ENCODE measurements at regions of chr1 and their contacts with region 1.

Region 1: DNA sequence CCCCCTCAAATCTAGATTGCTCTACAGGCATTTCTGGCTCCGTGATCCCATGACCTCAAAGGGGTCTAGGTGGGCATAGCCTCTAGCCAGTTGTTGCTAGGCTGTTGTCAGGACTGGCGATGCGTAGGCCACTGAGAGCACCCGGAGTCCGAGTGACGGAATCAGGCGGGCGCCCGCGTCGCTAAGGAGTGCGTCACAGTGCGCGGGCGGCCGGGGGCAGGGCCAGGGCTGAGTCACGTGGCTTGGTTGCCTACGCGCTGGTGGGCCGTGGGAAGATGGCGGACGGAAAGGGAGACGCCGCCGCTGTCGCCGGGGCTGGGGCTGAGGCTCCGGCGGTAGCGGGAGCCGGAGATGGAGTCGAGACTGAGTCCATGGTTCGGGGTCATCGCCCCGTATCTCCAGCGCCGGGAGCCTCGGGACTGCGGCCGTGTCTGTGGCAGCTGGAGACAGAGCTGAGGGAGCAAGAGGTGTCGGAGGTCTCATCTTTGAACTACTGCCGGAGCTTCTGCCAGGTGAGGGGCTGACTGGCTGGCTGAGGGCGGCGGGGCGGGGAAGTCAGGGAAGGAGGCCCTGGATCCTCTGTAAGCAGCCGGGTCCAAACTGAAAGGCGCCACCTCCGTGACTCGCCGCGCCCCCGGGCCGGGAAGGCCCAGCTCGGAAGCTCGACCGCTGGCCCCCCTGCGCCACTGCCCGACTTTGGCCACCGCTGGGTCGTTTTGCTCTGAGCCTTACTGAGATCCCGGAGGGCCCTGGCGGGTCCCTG is at the start of gene RLF:
- DNase-seq: peak; percentile 97
- ATAC-seq: peak; percentile 94 to 99 (median 96)
- H3K4me3 ChIP-seq: peak within 1 kb of the TSS; percentile 91
- H3K4me3 Mint-ChIP-seq: no peak within 1 kb of the TSS
- H3K27ac ChIP-seq: peak within 1 kb of the TSS; percentile 99
- H3K27ac Mint-ChIP-seq: no peak within 1 kb of the TSS
- H3K4me1 ChIP-seq: peaks cover 11% of the 10 kb centered on the region
- H3K4me1 Mint-ChIP-seq: peaks cover 7 to 18% of the 10 kb centered on the region in 2 donors
- H3K27me3 ChIP-seq: no peaks in the 10 kb centered on the region
- H3K27me3 Mint-ChIP-seq: no peaks in the 10 kb centered on the region
- CTCF ChIP-seq: no peak
- total RNA-seq, gene RLF: 25.6 to 29.7 (median 26.7) TPM

Region 2: GRCh38 chr1:39727221-39727931 is 433.9 kb before region 1 on chr1:
- intact Hi-C with region 1: no loop called
- DNase-seq: no peak
- ATAC-seq: peak in 1 of 3 donors; percentile 40
- H3K4me3 ChIP-seq: no peak overlapping the region
- H3K4me3 Mint-ChIP-seq: peak overlapping the region; percentile 50
- H3K27ac ChIP-seq: no peak overlapping the region
- H3K27ac Mint-ChIP-seq: no peak overlapping the region
- H3K4me1 ChIP-seq: no peaks in the 10 kb centered on the region
- H3K4me1 Mint-ChIP-seq: peaks cover 17 to 21% of the 10 kb centered on the region in 2 donors
- H3K27me3 ChIP-seq: peaks cover 17% of the 10 kb centered on the region
- H3K27me3 Mint-ChIP-seq: peaks cover 54 to 63% of the 10 kb centered on the region in 2 donors
- CTCF ChIP-seq: no peak

Region 3: DNA sequence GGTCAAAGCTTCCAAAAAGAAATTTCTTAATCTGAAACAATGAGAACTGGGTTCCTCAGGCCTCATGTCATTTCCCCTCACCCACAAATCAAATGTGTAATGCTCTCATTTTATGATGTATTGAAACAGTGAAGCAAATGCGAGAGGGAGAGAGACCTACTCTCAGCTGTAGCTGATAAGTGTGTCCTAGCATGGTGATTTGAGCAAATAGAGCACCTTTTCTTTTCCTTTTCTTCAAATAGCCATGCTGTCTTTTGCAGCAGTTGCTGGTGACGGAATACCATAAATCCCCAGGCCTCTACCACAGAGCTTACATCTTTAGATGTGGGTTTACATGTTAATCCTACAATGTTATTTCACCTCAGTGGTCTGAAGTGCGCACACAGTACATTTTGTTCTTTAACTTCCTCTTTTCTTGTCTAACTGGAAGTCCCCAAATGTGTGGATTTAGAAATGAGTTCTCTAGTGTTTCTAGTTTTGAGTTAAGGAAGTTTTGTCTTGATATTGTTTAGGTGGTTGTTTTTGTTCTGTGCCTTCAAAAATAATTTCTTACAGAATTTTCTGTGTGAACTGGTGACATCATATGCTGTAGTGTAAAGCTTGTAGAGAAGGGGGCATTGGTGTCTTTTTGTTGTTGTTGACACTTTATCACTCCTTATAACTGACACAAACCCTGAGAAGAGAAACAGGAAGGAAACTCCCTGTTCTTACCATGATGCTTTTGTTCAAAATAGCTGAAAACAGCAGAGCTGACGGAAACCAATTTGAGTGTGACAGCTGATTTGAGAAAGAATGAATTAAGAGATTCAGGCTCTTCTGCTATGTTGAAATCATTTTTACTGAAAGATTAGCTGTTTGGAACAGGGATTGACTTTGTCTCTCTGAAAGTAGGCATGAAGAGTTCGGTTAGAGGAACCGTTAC is 224.4 kb after region 1 on chr1:
- intact Hi-C with region 1: loop called (anchors 1 kb)
- DNase-seq: peak; percentile 37 to 94
- ATAC-seq: peak; percentile 75 to 91 (median 87)
- H3K4me3 ChIP-seq: peak overlapping the region; percentile 19
- H3K4me3 Mint-ChIP-seq: peak overlapping the region; percentile 87
- H3K27ac ChIP-seq: peak overlapping the region; percentile 100
- H3K27ac Mint-ChIP-seq: peak overlapping the region; percentile 98 to 99
- H3K4me1 ChIP-seq: peaks cover 80% of the 10 kb centered on the region
- H3K4me1 Mint-ChIP-seq: peaks cover 87% of the 10 kb centered on the region in 2 donors
- H3K27me3 ChIP-seq: no peaks in the 10 kb centered on the region
- H3K27me3 Mint-ChIP-seq: no peaks in the 10 kb centered on the region
- CTCF ChIP-seq: no peak

Measured in natural killer cell (primary cell).